Natural killer cell (primary cell): ENCODE measurements at regions of chr3 and their contacts with region 1.

Region 1: GRCh38 chr3:73100741-73101559 is 39.5 kb downstream of the EBLN2 start:
- DNase-seq: peak; percentile 58 to 86
- ATAC-seq: peak; percentile 79 to 93 (median 84)
- H3K4me3 ChIP-seq: no peak overlapping the region
- H3K4me3 Mint-ChIP-seq: no peak overlapping the region
- H3K27ac ChIP-seq: no peak overlapping the region
- H3K27ac Mint-ChIP-seq: no peak overlapping the region
- H3K4me1 ChIP-seq: no peaks in the 10 kb centered on the region
- H3K4me1 Mint-ChIP-seq: no peaks in the 10 kb centered on the region
- H3K27me3 ChIP-seq: no peaks in the 10 kb centered on the region
- H3K27me3 Mint-ChIP-seq: no peaks in the 10 kb centered on the region
- CTCF ChIP-seq: peak; percentile 84

Region 2: DNA sequence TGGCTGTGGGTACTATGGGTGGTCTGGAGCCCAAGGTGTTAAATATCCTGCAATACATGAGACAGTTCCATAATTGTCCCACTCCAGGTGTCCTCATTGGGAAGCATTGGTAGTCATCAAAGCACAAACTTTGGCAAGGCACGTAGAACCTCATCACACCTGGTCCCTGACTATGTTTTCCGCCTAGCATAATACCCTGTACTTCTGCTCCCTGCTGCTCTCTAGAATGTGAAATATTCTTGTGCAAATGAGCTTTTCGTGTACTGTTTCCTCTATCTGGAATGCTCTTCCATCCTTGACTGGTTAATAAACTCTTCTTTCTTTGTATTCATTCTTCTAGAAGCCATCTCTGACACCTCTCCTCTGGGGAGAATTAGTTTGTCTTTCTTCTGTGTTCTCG is 63.7 kb after region 1 on chr3:
- intact Hi-C with region 1: no loop called
- DNase-seq: no peak
- ATAC-seq: no peak
- H3K4me3 ChIP-seq: no peak overlapping the region
- H3K4me3 Mint-ChIP-seq: no peak overlapping the region
- H3K27ac ChIP-seq: no peak overlapping the region
- H3K27ac Mint-ChIP-seq: no peak overlapping the region
- H3K4me1 ChIP-seq: no peaks in the 10 kb centered on the region
- H3K4me1 Mint-ChIP-seq: no peaks in the 10 kb centered on the region
- H3K27me3 ChIP-seq: no peaks in the 10 kb centered on the region
- H3K27me3 Mint-ChIP-seq: no peaks in the 10 kb centered on the region
- CTCF ChIP-seq: no peak

Region 3: DNA sequence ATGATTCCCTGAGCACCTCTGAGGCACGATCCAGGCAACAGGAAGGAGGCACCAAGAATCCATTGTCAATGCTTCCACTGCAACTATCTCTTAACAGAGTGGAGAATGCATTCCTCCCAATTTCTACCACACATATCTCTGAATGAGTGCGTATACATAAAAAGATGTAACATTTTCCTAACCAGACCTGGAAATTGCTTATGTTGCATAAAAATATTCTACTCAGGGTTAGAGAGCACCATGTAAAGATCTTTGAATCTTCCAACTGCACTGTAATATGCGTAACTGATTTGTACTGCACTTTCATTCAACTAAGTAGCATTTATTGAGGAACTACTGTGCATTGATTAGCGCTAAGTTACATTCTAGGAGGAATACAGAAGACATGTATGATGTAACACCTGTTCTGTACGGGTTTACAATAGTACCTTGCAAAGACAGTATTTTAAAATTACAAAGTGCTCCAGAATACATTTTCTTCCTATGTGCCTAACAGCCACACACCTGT is 198.3 kb after region 1 on chr3:
- intact Hi-C with region 1: no loop called
- DNase-seq: no peak
- ATAC-seq: no peak
- H3K4me3 ChIP-seq: no peak overlapping the region
- H3K4me3 Mint-ChIP-seq: no peak overlapping the region
- H3K27ac ChIP-seq: no peak overlapping the region
- H3K27ac Mint-ChIP-seq: no peak overlapping the region
- H3K4me1 ChIP-seq: no peaks in the 10 kb centered on the region
- H3K4me1 Mint-ChIP-seq: no peaks in the 10 kb centered on the region
- H3K27me3 ChIP-seq: no peaks in the 10 kb centered on the region
- H3K27me3 Mint-ChIP-seq: no peaks in the 10 kb centered on the region
- CTCF ChIP-seq: no peak

Region 4: DNA sequence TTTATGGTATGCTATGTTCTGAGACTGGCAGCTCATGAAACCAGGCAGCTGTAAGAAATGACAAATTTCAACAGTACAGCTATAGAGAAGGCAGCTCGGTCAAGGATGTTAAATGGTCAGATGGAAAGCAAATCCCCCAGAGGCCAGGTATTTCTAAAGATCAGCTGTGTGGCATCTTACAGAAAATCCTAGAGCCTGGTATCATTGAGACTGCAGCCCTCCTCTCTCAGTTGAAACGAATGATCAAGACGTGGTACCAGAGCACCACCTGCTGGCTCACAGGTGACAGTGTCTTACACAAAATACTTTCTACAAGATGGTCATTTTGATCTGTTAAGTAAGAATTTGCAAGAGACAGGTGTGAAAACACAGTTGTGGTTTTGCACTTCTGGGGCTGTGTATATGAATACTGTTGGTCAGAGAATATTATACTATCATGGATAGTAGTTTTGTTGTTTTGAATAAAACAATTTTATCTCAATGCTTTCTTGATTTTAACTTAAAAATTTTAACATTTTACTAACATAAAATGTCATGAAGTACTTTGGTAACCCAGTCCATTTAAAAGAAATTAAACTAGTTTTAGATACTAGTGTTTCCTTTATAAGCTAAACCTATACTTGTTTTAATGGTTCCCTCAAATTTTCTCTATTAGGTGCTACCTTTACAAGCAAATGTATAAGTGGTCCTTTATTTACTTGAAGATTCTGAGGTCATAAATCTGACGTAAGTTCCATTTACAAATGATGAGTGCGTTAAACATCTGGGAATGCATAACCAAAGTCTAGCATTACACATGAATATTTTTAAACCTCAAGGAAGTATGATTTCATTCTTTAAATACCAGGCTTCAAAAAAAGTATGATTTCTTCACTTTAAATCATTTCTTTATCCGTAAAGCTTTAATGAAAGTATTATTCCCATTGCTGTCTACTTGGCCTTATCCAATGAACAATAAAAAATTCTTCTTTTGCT is 401.9 kb after region 1 on chr3:
- intact Hi-C with region 1: loop called (anchors 1 kb)
- DNase-seq: peak in 1 of 2 donors; percentile 71
- ATAC-seq: peak; percentile 38 to 60 (median 46)
- H3K4me3 ChIP-seq: no peak overlapping the region
- H3K4me3 Mint-ChIP-seq: no peak overlapping the region
- H3K27ac ChIP-seq: no peak overlapping the region
- H3K27ac Mint-ChIP-seq: no peak overlapping the region
- H3K4me1 ChIP-seq: no peaks in the 10 kb centered on the region
- H3K4me1 Mint-ChIP-seq: peaks cover 0 to 4% of the 10 kb centered on the region in 2 donors
- H3K27me3 ChIP-seq: no peaks in the 10 kb centered on the region
- H3K27me3 Mint-ChIP-seq: no peaks in the 10 kb centered on the region
- CTCF ChIP-seq: peak; percentile 44